ENCODE measurements at regions of chr7 and their contacts with region 1.

Region 1: GRCh38 chr7:1532483-1533424 is 2.3 kb downstream of the MAFK start:
- DNase-seq: peak; percentile 40
- H3K4me3 Mint-ChIP-seq: peak overlapping the region; percentile 89
- H3K27ac Mint-ChIP-seq: peak overlapping the region; percentile 94
- H3K4me1 Mint-ChIP-seq: peaks cover 18% of the 10 kb centered on the region
- H3K27me3 Mint-ChIP-seq: no peaks in the 10 kb centered on the region

Region 2: DNA sequence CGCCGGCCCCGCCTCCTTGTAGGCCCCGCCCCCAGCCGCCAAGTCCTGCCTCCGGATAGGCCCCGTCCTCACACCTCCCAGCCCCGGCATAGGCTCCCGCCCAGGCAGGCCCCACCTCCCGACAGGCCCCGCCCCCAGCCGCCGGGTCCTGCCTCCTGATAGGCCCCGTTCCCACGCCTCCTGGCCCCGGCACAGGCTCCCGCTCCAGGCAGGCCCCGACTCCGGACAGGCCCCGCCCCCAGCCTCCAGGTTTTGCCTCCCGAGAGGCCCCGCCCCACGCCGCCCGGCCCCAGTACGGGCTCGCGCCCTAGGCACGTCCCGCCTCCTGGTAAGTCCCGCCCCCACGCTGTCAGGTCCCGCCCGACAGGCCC is 73.2 kb before region 1 on chr7:
- intact Hi-C with region 1: loop called (anchors 1 kb)
- DNase-seq: peak; percentile 96
- H3K4me3 Mint-ChIP-seq: peak overlapping the region; percentile 72
- H3K27ac Mint-ChIP-seq: no peak overlapping the region
- H3K4me1 Mint-ChIP-seq: no peaks in the 10 kb centered on the region
- H3K27me3 Mint-ChIP-seq: peaks cover 4% of the 10 kb centered on the region

Region 3: GRCh38 chr7:1503816-1504775 is 28.7 kb before region 1 on chr7 and contains the start of gene INTS1:
- intact Hi-C with region 1: loop called (anchors 1 kb)
- DNase-seq: peak; percentile 90
- H3K4me3 Mint-ChIP-seq: peak within 1 kb of the TSS; percentile 89
- H3K27ac Mint-ChIP-seq: peak within 1 kb of the TSS; percentile 85
- H3K4me1 Mint-ChIP-seq: peaks cover 31% of the 10 kb centered on the region
- H3K27me3 Mint-ChIP-seq: no peaks in the 10 kb centered on the region
- total RNA-seq, gene INTS1: 94.3 and 97.9 TPM in 2 replicates

Region 4: GRCh38 chr7:1512781-1513656 is 19.7 kb before region 1 on chr7:
- intact Hi-C with region 1: loop called (anchors 2 kb)
- DNase-seq: peak; percentile 20
- H3K4me3 Mint-ChIP-seq: no peak overlapping the region
- H3K27ac Mint-ChIP-seq: no peak overlapping the region
- H3K4me1 Mint-ChIP-seq: peaks cover 13% of the 10 kb centered on the region
- H3K27me3 Mint-ChIP-seq: no peaks in the 10 kb centered on the region

Region 5: GRCh38 chr7:1569833-1570633 is 37.3 kb after region 1 on chr7 and contains the start of gene PSMG3:
- intact Hi-C with region 1: loop called (anchors 1 kb)
- DNase-seq: peak; percentile 86
- H3K4me3 Mint-ChIP-seq: peak within 1 kb of the TSS; percentile 89
- H3K27ac Mint-ChIP-seq: peak within 1 kb of the TSS; percentile 81
- H3K4me1 Mint-ChIP-seq: peaks cover 31% of the 10 kb centered on the region
- H3K27me3 Mint-ChIP-seq: no peaks in the 10 kb centered on the region
- total RNA-seq, gene PSMG3: 55.7 and 56.0 TPM in 2 replicates

Region 6: GRCh38 chr7:2519119-2519930 is 986.6 kb after region 1 on chr7 and contains the start of gene LFNG:
- intact Hi-C with region 1: loop called (anchors 5 kb)
- DNase-seq: peak; percentile 84
- H3K4me3 Mint-ChIP-seq: peak within 1 kb of the TSS; percentile 97
- H3K27ac Mint-ChIP-seq: peak within 1 kb of the TSS; percentile 91
- H3K4me1 Mint-ChIP-seq: peaks cover 35% of the 10 kb centered on the region
- H3K27me3 Mint-ChIP-seq: no peaks in the 10 kb centered on the region
- total RNA-seq, gene LFNG: 34.8 and 34.9 TPM in 2 replicates

Measured in activated T-helper 1 cell treated with anti-CD3 and anti-CD28 coated beads, Interleukin-12 subunit alpha, Interleukin-12 subunit beta, Interleukin-2, Interleukin-4 antibody, amounts not matched to agents 30 ng/mL and 10 ng/mL and 1 ng/mL, durations not matched to agents 14 hours and 24 hours and 36 hours (primary cell).